Mammary epithelial cell (primary cell): ENCODE measurements at regions of chr5 and their contacts with region 1.

Region 1: DNA sequence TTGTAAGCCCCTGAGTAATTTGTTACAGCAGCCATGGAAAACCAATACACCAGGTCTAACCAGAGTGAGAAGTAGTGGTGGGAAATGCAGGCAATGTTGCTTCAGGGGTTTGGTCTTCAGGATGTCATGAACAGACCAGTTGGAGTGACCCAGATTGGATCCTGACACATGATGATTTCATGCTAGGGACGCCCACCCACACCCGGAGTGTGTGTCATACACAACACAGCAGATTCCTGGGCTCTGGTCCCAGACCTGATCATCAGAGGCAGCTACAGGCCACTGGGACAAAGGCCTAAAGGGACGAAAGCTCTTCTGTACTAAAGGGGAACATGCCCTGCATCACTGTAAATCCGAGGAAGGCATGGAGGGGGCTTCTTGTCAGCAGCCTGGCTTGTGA is 194.2 kb downstream of the NSG2 start:
- DNase-seq: no peak
- H3K4me3 ChIP-seq: no peak overlapping the region
- H3K27ac ChIP-seq: no peak overlapping the region
- H3K4me1 ChIP-seq: no peaks in the 10 kb centered on the region
- H3K27me3 ChIP-seq: no peaks in the 10 kb centered on the region
- CTCF ChIP-seq: no peak

Region 2: DNA sequence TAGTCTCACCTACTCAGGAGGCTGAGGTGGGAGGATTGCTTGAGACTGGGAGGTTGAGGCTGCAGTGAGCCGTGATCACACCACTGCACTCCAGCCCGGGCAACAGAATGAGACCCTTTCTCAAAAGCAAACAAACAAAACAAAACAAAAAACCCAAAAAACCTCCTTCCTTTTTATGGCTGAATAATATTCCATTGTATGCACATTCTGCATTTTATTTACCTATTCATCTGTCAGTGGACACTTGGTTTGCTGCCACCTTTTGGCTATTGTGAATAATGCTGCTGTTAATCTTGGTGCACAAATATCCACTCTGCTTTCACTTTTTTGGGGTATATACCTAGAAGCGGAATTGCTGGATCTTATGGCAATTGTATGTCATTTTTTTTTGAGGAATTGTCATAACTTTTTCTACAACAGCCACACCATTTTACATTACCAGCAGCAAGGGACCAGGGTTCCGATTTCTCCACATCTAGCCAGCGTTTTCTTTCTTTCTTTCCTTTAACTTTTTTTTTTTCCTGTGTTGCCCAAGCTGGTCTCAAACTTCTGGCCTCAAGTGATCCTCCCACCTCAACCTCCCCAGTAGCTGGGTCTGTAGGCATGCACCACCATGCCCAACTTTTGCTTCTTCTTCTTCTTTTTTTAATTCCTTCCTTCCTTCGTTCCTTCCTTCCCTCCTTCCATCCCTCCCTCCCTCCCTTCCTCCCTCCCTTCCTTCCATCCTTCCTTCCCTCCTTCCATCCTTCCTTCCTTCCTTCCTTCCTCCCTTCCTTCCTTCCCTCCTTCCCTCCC is 1035.3 kb before region 1 on chr5:
- CTCF ChIA-PET with region 1: no interaction called
- dilution Hi-C with region 1: no loop called
- in situ Hi-C with region 1: no loop called
- intact Hi-C with region 1: no loop called
- DNase-seq: peak; percentile 12
- H3K4me3 ChIP-seq: no peak overlapping the region
- H3K27ac ChIP-seq: no peak overlapping the region
- H3K4me1 ChIP-seq: peaks cover 11% of the 10 kb centered on the region
- H3K27me3 ChIP-seq: no peaks in the 10 kb centered on the region
- CTCF ChIP-seq: peak; percentile 45 to 66

Region 3: GRCh38 chr5:174189654-174190541 is 49.8 kb before region 1 on chr5:
- CTCF ChIA-PET with region 1: no interaction called
- dilution Hi-C with region 1: loop called (anchors 5 kb)
- in situ Hi-C with region 1: no loop called
- intact Hi-C with region 1: no loop called
- DNase-seq: no peak
- H3K4me3 ChIP-seq: no peak overlapping the region
- H3K27ac ChIP-seq: no peak overlapping the region
- H3K4me1 ChIP-seq: no peaks in the 10 kb centered on the region
- H3K27me3 ChIP-seq: no peaks in the 10 kb centered on the region
- CTCF ChIP-seq: no peak